ENCODE measurements at regions of chr6 and their contacts with region 1.

Region 1: DNA sequence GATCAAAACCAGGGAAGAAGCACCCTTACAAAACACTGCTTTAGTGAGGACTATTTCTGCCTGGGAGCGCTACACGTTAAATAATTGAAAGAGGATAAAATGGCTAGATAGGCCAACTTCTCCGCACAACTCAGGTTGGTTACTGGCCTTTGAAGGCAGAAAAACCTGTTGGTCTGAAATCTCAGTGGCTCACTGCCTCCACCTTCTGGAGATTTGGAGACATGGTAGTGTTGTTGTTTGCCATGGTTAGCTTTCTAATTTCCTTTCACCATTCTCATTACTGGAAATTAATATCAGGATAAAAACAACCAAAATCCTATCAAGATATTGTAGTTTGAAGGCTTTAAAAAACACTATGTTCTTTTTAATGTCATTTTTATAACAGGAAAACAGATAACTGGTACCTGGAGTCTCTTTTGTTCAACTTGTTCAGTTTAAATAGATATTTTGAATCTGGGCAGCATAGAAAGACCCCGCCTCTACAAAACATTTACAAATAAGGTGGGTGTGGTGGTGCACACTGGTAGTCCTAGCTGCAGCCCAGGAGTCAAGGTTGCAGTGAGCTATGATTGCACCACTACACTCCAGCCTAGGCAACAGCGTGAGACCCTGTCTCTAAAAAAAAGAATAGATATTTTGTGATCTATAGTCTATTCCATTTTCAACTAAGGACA is 27.5 kb upstream of the BCLAF1 start:
- DNase-seq: peak; percentile 46
- H3K4me3 Mint-ChIP-seq: no peak overlapping the region
- H3K27ac Mint-ChIP-seq: no peak overlapping the region
- H3K4me1 Mint-ChIP-seq: no peaks in the 10 kb centered on the region
- H3K27me3 Mint-ChIP-seq: no peaks in the 10 kb centered on the region
- CTCF ChIP-seq: peak; percentile 66

Region 2: GRCh38 chr6:135451693-135452092 is 865.5 kb before region 1 on chr6:
- CTCF ChIA-PET with region 1: no interaction called
- intact Hi-C with region 1: loop called (anchors 5 kb)
- DNase-seq: no peak
- H3K4me3 Mint-ChIP-seq: no peak overlapping the region
- H3K27ac Mint-ChIP-seq: no peak overlapping the region
- H3K4me1 Mint-ChIP-seq: no peaks in the 10 kb centered on the region
- H3K27me3 Mint-ChIP-seq: no peaks in the 10 kb centered on the region
- CTCF ChIP-seq: peak; percentile 20

Region 3: GRCh38 chr6:135506270-135506997 is 810.7 kb before region 1 on chr6:
- CTCF ChIA-PET with region 1: no interaction called
- intact Hi-C with region 1: loop called (anchors 10 kb)
- DNase-seq: peak; percentile 8
- H3K4me3 Mint-ChIP-seq: no peak overlapping the region
- H3K27ac Mint-ChIP-seq: no peak overlapping the region
- H3K4me1 Mint-ChIP-seq: peaks cover 16% of the 10 kb centered on the region
- H3K27me3 Mint-ChIP-seq: no peaks in the 10 kb centered on the region
- CTCF ChIP-seq: peak; percentile 21

Region 4: GRCh38 chr6:135759831-135760230 is 557.3 kb before region 1 on chr6:
- CTCF ChIA-PET with region 1: no interaction called
- intact Hi-C with region 1: no loop called
- DNase-seq: peak; percentile 26
- H3K4me3 Mint-ChIP-seq: no peak overlapping the region
- H3K27ac Mint-ChIP-seq: no peak overlapping the region
- H3K4me1 Mint-ChIP-seq: no peaks in the 10 kb centered on the region
- H3K27me3 Mint-ChIP-seq: no peaks in the 10 kb centered on the region
- CTCF ChIP-seq: peak; percentile 22

Region 5: DNA sequence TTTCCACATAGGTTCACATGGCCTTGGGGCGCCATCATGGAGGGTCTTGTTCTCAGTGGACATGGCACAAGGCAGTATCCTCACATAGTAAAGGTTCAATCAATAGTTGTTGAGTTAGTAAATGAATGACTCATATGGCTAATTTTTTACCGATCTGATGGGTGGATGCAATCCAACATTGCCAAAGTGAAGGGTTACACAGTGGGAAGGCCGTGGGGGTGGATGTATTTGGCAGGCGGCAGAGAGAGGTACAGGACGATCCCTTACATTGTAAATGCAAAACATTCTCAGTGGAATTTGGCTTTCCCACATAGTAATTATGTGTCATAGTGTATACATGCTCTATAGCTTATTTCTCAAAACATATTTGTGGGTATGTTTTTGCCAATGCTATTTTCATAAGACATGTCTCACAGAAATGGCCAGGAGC is 486.7 kb before region 1 on chr6:
- CTCF ChIA-PET with region 1: no interaction called
- intact Hi-C with region 1: loop called (anchors 10 kb)
- DNase-seq: no peak
- H3K4me3 Mint-ChIP-seq: no peak overlapping the region
- H3K27ac Mint-ChIP-seq: no peak overlapping the region
- H3K4me1 Mint-ChIP-seq: peaks cover 14% of the 10 kb centered on the region
- H3K27me3 Mint-ChIP-seq: no peaks in the 10 kb centered on the region
- CTCF ChIP-seq: no peak

Region 6: DNA sequence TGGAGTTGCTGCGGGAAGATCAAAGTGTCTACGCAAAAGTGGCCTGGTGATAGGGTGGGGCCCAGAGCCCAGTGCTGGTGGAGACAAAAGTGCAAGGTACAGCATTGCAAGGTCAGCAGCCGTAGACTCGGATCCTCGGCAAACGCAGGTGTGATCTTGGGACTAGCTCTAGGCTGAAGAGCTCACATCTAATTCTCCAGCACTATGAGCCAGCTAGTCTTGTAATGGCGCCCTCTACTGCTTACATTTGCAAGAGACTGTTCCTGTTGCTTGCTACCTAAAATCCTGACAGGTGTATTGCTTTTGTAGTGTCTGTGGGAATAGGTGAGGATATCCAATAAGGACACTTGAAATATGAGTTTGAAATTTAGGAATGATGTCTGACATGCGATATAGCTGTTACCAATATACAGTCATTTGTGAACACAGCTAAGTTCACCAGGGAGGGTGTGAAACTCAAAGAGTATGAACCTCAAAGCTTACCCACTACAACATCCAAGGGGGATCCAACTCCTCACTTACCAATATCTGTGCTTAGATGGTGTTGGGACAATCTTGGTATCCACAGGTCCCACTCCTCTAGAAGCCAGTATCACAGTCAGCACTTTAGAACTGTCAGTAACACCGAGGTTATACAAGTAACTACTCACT is 407.3 kb before region 1 on chr6:
- CTCF ChIA-PET with region 1: no interaction called
- intact Hi-C with region 1: no loop called
- DNase-seq: peak; percentile 56
- H3K4me3 Mint-ChIP-seq: no peak overlapping the region
- H3K27ac Mint-ChIP-seq: no peak overlapping the region
- H3K4me1 Mint-ChIP-seq: peaks cover 19% of the 10 kb centered on the region
- H3K27me3 Mint-ChIP-seq: no peaks in the 10 kb centered on the region
- CTCF ChIP-seq: no peak

Region 7: DNA sequence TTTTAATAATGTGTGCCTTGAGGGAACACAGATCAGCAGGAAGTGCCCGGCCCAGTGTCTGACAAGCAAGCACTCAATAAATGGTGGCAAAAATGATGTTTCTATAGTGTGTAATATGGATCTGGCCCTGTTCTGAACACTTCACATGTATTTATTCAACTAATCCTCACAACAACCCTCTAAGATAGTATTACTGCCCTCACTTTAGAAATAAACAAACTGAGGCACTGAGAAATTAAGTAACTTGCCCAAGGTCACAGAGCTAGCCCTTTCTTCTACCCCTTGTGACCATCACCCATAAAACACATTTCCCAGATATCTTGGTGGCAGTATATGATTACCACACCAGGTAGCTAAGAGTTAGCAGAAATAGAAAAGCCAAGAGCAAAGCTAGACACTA is 54.2 kb before region 1 on chr6:
- CTCF ChIA-PET with region 1: no interaction called
- intact Hi-C with region 1: no loop called
- DNase-seq: no peak
- H3K4me3 Mint-ChIP-seq: no peak overlapping the region
- H3K27ac Mint-ChIP-seq: no peak overlapping the region
- H3K4me1 Mint-ChIP-seq: peaks cover 13% of the 10 kb centered on the region
- H3K27me3 Mint-ChIP-seq: no peaks in the 10 kb centered on the region
- CTCF ChIP-seq: no peak

Measured in Calu3 (cell line).